ENCODE measurements at regions of chr17 and their contacts with region 1.

Region 1: DNA sequence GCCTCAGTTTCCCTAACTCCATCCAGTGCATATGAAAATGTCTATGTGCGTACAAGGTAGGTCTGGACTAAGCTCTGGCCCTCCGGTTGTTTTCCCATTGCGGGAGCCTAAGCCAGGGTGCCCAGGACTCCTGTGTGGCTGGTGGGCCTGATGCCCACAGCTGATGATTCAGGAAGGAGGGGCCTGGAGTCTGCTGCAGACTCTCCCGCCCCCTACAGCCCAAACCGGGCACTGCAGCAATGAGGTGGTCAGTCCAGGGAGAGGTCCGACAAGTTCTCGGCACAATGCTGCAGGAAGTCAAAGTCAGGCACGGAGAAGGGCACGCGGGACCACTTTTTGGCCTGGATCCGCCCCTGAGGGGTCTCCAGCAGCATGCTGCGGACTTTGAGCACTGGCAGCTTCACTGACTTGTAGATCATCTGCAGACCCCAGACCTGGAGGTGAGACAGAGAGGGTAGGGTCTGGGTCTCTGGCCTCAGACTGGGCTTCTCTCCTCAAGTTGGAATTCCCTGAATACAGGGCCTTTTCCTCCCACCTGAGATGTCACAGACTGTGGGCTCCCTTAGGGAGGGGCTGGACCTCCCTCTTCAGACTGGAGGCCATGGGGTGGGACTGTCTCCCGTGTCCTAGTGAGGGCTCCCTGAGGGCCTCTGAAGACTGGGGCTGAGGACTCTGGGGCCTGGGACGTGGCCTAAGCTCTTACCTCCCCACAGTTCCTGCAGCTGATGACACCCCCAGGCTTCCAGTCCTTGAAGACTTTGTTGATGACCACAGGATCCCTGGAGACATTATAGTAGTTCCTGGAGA is 3.4 kb upstream of the ZNF385C start:
- DNase-seq: peak; percentile 45 to 56 (median 47)
- H3K4me3 ChIP-seq: no peak overlapping the region
- H3K4me3 Mint-ChIP-seq: no peak overlapping the region
- H3K27ac ChIP-seq: no peak overlapping the region
- H3K27ac Mint-ChIP-seq: no peak overlapping the region
- H3K4me1 ChIP-seq: peaks cover 6 to 7% of the 10 kb centered on the region in 2 donors
- H3K4me1 Mint-ChIP-seq: peaks cover 14% of the 10 kb centered on the region
- H3K27me3 ChIP-seq: peaks cover 13 to 22% of the 10 kb centered on the region in 2 donors
- H3K27me3 Mint-ChIP-seq: peaks cover 24 to 27% (median 26%) of the 10 kb centered on the region in 3 donors
- CTCF ChIP-seq: peak; percentile 79

Region 2: DNA sequence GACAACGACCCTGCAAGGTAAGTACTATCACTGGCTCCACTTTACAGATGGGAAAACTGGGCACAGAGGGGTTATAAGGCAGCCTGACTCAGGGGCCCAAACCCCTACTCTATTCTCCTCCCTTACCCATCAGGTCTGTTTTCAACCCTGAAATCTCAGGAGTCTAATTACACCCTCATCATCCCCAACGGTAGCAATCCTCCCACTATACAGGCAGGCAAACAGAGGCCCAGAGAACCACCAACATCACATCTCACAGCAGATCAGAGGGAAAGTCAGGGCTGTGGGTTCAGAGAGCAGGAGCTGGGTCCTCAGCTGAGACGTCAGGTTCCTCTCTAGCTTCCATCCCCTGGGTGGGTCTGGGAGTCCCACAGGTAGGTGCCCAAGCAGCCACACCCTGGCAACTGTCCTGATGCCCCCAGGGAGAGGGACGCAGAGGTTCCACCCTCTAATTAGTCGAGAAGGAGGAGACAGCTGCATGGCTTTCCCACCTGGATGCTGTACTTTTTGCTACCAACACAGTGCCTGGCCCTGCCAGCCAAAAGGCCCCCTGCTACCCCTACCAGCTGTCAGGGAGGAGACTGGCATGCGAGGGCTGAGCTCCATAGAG is 331.6 kb before region 1 on chr17:
- intact Hi-C with region 1: no loop called
- DNase-seq: no peak
- H3K4me3 ChIP-seq: no peak overlapping the region
- H3K4me3 Mint-ChIP-seq: no peak overlapping the region
- H3K27ac ChIP-seq: no peak overlapping the region
- H3K27ac Mint-ChIP-seq: no peak overlapping the region
- H3K4me1 ChIP-seq: no peaks in the 10 kb centered on the region
- H3K4me1 Mint-ChIP-seq: no peaks in the 10 kb centered on the region
- H3K27me3 ChIP-seq: no peaks in the 10 kb centered on the region
- H3K27me3 Mint-ChIP-seq: peaks cover 0 to 4% (median 3%) of the 10 kb centered on the region in 3 donors
- CTCF ChIP-seq: no peak

Region 3: DNA sequence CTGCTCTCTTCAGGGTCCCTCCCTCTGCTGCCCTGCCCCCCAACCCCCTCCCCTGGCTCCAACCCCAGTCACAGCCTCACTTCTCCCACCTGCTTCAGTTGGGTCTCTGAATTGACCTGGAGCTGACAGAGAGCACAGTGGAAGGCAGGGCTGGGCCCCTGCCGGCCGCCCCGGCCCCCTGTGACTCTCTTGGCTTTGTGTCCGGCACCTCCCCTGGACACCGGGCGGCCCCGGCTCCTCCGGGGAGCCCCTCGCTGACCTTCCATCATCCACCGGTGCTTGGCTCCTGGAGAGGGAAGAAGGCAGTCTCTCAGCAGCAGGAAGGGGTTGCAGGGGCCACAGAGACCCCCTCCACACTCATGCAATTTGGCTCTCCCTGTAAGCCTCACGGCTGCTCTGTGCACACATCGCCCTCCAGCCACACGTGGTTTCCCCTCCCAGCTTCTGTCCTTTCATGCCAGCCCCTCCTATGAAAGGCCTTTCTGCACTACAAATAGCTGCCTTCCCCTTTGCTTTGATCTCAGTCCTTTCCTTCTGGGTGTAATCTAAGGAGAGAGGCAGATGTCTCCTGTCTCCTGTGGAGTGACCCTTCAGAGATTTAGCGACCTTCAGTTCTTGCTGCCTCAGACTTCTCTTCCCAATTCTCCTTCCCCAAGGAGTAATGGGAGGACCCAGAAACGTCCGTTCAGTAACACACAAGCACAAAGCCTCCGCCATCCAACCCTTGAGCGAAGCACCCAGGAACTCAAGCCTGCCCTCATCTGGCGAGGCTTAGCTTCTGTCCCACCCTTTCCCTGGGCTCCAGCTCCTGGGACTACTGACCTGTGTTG is 73.5 kb before region 1 on chr17:
- intact Hi-C with region 1: loop called in 1 of 2 experiments (anchors 5 kb)
- DNase-seq: peak in 1 of 3 donors; percentile 14
- H3K4me3 ChIP-seq: no peak overlapping the region
- H3K4me3 Mint-ChIP-seq: peak overlapping the region in 1 of 2 donors; percentile 17
- H3K27ac ChIP-seq: no peak overlapping the region
- H3K27ac Mint-ChIP-seq: peak overlapping the region in 3 of 7 donors; percentile 21 to 73 (median 28)
- H3K4me1 ChIP-seq: peaks cover 46 to 53% of the 10 kb centered on the region in 2 donors
- H3K4me1 Mint-ChIP-seq: peaks cover 51% of the 10 kb centered on the region
- H3K27me3 ChIP-seq: no peaks in the 10 kb centered on the region
- H3K27me3 Mint-ChIP-seq: peaks cover 0 to 5% (median 4%) of the 10 kb centered on the region in 3 donors
- CTCF ChIP-seq: peak; percentile 22

Region 4: GRCh38 chr17:42067351-42068091 is 34.2 kb before region 1 on chr17:
- intact Hi-C with region 1: loop called in 1 of 2 experiments (anchors 5 kb)
- DNase-seq: peak; percentile 29 to 57 (median 54)
- H3K4me3 ChIP-seq: no peak overlapping the region
- H3K4me3 Mint-ChIP-seq: no peak overlapping the region
- H3K27ac ChIP-seq: no peak overlapping the region
- H3K27ac Mint-ChIP-seq: no peak overlapping the region
- H3K4me1 ChIP-seq: peaks cover 22 to 26% of the 10 kb centered on the region in 2 donors
- H3K4me1 Mint-ChIP-seq: peaks cover 26% of the 10 kb centered on the region
- H3K27me3 ChIP-seq: peaks cover 4 to 15% of the 10 kb centered on the region in 2 donors
- H3K27me3 Mint-ChIP-seq: peaks cover 16 to 22% (median 19%) of the 10 kb centered on the region in 3 donors
- CTCF ChIP-seq: peak; percentile 97